MCF 10A (cell line): ENCODE measurements at regions of chr1 and their contacts with region 1.

Region 1: GRCh38 chr1:160251687-160252526 is 10.4 kb downstream of the DCAF8 start:
- DNase-seq: peak; percentile 87
- H3K4me3 Mint-ChIP-seq: no peak overlapping the region
- H3K27ac Mint-ChIP-seq: peak overlapping the region; percentile 75
- H3K4me1 Mint-ChIP-seq: peaks cover 25% of the 10 kb centered on the region
- H3K27me3 Mint-ChIP-seq: no peaks in the 10 kb centered on the region
- CTCF ChIP-seq: peak; percentile 85

Region 2: DNA sequence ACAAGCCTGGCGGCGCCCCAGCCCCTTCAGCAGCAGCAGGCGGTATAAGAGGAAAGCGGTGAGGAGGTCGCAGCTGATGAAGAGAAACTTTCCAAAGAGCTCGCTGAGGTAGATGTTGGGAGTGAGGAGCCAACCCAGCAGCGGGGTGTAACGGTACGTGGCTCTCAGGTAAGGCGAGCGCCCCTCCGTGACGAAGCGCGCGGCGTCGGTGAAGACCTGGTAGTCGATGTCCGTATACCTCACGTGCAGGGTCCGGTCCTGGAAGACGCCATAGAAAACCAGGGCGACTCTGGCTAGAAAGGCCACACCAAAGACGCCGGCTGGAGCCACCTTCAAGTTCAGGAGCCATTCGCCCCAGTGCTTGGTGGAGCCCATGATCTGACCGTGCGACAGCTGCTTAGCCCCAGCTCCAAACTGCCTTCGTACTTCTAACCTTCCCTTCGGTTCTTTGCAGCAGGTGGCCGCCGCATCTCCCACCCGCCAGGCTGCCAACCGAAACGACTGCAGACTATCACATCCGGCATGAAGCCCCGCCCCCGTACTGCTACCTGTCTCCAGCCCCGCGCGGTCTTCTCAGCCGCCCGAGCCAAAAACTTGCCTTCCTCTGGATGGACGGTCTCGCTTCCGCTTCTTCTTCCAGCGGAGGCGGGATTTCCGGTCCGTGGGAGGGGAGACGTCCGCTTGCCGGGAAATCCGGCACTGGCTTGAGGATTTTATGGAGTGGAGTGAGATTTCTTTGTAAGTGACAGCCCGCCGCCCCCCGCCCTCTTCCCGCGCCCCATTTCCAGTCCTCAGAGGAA is 220.3 kb before region 1 on chr1 and contains the start of gene PIGM:
- CTCF ChIA-PET with region 1: interaction called, 17 read pairs
- POLR2A ChIA-PET with region 1: interaction called, 3 read pairs
- intact Hi-C with region 1: no loop called
- DNase-seq: peak; percentile 99
- H3K4me3 Mint-ChIP-seq: peak within 1 kb of the TSS; percentile 80
- H3K27ac Mint-ChIP-seq: peak within 1 kb of the TSS; percentile 60
- H3K4me1 Mint-ChIP-seq: peaks cover 24% of the 10 kb centered on the region
- H3K27me3 Mint-ChIP-seq: no peaks in the 10 kb centered on the region
- CTCF ChIP-seq: no peak
- total RNA-seq, gene PIGM: 7.7 and 10.1 TPM in 2 replicates

Region 3: GRCh38 chr1:160085686-160086455 is 166.0 kb before region 1 on chr1:
- CTCF ChIA-PET with region 1: interaction called, 22 read pairs
- POLR2A ChIA-PET with region 1: interaction called, 5 read pairs
- intact Hi-C with region 1: loop called (anchors 1 kb)
- DNase-seq: peak; percentile 82
- H3K4me3 Mint-ChIP-seq: no peak overlapping the region
- H3K27ac Mint-ChIP-seq: no peak overlapping the region
- H3K4me1 Mint-ChIP-seq: peaks cover 5% of the 10 kb centered on the region
- H3K27me3 Mint-ChIP-seq: peaks cover 24% of the 10 kb centered on the region
- CTCF ChIP-seq: peak; percentile 96

Region 4: DNA sequence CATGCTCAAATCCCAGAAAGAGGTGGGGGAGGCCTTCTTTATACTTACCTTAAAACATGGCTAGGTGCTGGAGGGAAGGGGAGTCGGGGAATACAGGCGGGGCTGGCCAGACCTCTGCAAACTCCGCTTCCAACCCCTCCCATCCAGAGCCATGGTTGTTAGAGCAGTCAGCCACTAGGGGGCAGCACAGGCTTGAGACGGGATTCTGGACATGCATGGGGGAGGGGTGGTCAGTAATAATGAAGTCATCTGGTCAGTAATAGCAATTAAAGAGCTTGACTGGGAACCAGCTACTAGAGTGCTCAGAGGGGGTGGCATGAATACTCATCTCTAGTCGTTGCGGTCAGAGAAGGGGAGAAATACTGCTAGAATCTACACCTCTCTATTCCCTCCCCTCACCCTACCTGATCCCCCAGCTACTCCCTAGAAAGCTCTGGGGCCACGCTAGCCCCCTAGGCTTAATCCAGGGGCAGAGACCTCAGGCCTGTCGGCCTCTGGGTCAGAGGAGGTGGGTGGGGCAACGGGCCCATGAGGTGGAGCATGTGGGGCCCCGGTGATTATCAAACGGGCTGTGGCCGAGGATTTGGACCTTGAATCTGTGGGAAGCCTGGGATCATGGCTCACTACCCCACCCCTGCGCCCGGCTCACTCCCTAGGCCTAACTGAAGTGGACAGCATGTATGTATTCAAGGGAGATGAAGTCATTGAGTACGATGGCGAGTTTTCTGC is 58.7 kb before region 1 on chr1:
- CTCF ChIA-PET with region 1: interaction called, 84 read pairs
- POLR2A ChIA-PET with region 1: interaction called, 15 read pairs
- intact Hi-C with region 1: loop called (anchors 1 kb)
- DNase-seq: peak; percentile 94
- H3K4me3 Mint-ChIP-seq: no peak overlapping the region
- H3K27ac Mint-ChIP-seq: no peak overlapping the region
- H3K4me1 Mint-ChIP-seq: no peaks in the 10 kb centered on the region
- H3K27me3 Mint-ChIP-seq: no peaks in the 10 kb centered on the region
- CTCF ChIP-seq: peak; percentile 100

Region 5: DNA sequence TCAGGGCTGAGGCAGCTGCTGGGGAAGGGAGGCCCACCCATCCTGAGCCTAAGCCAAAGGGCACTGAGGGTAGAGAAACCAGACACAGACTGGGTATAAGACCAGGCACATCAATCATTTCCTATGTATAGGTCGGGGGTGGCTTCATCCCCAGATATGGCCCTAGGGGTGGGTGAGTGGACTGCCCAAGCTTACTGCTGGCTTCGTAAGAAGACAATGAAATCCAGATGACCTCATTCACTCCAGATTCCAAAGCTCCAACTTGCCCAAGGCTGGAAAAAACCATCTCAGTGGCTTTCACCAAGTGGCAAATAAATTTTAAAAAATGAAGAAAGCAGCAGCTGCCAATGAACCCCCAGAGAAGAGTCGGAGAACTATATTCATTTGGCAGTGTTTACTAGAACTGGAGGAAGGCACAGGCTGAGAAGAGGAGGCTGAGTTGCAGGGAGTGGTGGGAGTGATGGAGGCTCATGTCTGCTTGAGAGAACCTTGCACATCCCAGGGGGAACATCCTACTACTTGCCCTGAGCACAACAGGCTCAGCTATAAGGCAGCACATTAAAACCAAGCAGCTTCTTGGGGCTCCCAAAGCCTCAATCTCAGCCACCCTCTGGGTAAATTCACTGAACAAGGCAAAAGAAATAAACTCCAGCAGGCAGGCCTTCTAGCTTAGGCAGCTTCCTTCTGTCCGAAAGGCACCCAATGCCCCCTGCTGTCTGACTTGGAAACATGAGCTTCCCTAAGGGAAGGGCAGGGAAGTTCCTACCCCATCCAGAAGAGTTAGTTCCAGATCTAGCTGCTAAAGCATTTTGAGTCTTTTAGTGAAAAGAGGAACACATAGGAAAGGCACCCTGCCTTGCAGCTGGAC is 32.6 kb before region 1 on chr1:
- CTCF ChIA-PET with region 1: interaction called, 104 read pairs
- POLR2A ChIA-PET with region 1: interaction called, 15 read pairs
- intact Hi-C with region 1: no loop called
- DNase-seq: peak; percentile 61
- H3K4me3 Mint-ChIP-seq: no peak overlapping the region
- H3K27ac Mint-ChIP-seq: no peak overlapping the region
- H3K4me1 Mint-ChIP-seq: peaks cover 7% of the 10 kb centered on the region
- H3K27me3 Mint-ChIP-seq: no peaks in the 10 kb centered on the region
- CTCF ChIP-seq: peak; percentile 47

Region 6: DNA sequence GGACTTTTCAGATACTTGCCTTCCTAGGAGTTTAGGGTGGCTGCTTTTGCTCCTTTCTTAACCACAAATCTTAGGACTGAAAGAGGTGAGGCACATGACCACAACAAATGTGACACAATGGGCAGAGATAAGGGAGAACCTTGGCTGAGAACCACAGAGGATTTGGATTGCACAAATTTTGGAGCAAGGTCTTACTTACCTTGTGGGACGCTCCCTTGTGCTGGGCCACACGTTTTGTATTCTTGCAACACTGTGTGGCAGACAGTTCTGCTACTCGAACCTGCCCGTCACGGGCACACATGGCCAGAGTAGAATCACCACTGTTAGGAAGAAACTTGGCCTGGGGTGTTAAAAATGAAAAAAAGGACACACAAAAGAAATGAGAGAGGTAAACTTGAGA is 13.5 kb before region 1 on chr1:
- CTCF ChIA-PET with region 1: interaction called, 103 read pairs
- POLR2A ChIA-PET with region 1: interaction called, 27 read pairs
- intact Hi-C with region 1: no loop called
- DNase-seq: no peak
- H3K4me3 Mint-ChIP-seq: no peak overlapping the region
- H3K27ac Mint-ChIP-seq: peak overlapping the region; percentile 39
- H3K4me1 Mint-ChIP-seq: peaks cover 6% of the 10 kb centered on the region
- H3K27me3 Mint-ChIP-seq: no peaks in the 10 kb centered on the region
- CTCF ChIP-seq: no peak

Region 7: DNA sequence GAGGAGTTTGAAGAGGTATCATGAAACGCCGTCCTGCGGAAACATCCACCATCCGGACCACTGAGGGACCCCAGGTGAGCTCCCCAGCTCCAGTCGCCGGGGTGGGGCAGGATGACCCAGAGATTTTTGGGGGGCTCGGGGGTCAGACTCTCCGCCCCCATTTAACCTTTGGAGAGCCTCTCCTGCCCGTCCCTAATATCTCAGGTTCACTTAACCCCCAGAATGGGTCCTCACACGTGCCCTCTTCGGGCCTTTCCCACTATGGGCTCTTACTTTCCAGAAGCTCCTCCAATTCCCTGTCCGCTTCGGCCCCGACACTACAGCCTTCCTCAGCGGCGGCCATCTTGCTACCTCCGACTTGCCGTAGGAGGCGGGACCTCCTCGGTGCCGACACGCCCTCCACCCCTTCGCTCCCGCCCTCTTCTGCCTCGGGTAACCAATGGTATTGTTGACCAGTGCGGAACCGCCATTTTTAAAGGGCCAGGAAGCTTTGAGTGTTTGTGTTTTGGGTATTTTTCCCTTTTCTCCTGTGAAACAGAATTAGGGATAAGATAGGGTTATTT is 33.0 kb after region 1 on chr1 and contains the start of gene PEX19:
- CTCF ChIA-PET with region 1: interaction called, 133 read pairs
- POLR2A ChIA-PET with region 1: interaction called, 28 read pairs
- intact Hi-C with region 1: no loop called
- DNase-seq: peak; percentile 97
- H3K4me3 Mint-ChIP-seq: peak within 1 kb of the TSS; percentile 100
- H3K27ac Mint-ChIP-seq: peak within 1 kb of the TSS; percentile 99
- H3K4me1 Mint-ChIP-seq: peaks cover 19% of the 10 kb centered on the region
- H3K27me3 Mint-ChIP-seq: no peaks in the 10 kb centered on the region
- CTCF ChIP-seq: no peak
- total RNA-seq, gene PEX19: 61.2 and 73.2 TPM in 2 replicates

Region 8: GRCh38 chr1:160410406-160411005 is 158.6 kb after region 1 on chr1:
- CTCF ChIA-PET with region 1: no interaction called
- POLR2A ChIA-PET with region 1: no interaction called
- intact Hi-C with region 1: no loop called
- DNase-seq: no peak
- H3K4me3 Mint-ChIP-seq: no peak overlapping the region
- H3K27ac Mint-ChIP-seq: no peak overlapping the region
- H3K4me1 Mint-ChIP-seq: peaks cover 21% of the 10 kb centered on the region
- H3K27me3 Mint-ChIP-seq: no peaks in the 10 kb centered on the region
- CTCF ChIP-seq: no peak